BJ (cell line): ENCODE measurements at regions of chr7 and their contacts with region 1.

Region 1: DNA sequence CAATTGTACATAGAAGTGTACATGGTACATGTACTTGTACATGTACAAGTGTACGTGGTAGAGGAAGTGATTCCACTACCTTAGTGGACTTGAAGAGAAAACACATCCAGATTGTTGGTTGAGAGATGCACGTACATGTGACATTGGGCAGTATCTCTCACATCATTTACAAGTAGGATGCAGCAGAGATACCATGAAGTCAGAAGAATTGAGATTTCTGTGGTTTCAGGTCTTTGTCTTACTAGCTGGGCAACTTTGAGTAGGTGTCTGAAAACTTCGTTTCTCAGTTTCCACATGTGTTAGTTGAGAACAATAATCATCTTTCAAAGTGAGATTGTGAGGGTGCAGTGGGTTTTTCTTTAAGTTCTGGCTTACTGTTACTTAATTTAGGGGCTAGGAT is 21.5 kb downstream of the CLDN12 start:
- DNase-seq: no peak
- H3K4me3 ChIP-seq: no peak overlapping the region
- H3K27me3 ChIP-seq: no peaks in the 10 kb centered on the region
- CTCF ChIP-seq: no peak

Region 2: DNA sequence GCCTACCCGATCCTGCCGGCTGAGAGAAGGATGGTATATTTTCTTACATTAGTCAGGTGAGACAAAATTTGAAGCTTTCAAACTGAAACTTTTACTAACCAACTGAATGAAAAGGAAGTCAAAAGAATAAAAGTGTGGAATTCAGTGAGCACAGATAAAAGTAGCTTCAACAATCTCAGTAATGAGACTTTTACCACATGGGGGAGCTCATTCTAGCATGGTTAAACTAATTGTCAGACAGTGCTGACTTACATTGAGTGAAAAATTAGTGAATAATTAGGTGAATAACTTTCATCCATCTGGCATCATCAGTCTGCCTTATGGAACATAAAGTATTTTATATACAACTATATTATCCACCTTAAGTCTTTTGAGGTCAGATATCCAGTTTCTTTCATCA is 112.0 kb before region 1 on chr7:
- CTCF ChIA-PET with region 1: interaction called, 23 read pairs
- POLR2A ChIA-PET with region 1: no interaction called
- DNase-seq: no peak
- H3K4me3 ChIP-seq: no peak overlapping the region
- H3K27me3 ChIP-seq: 0 out of 2 replicates have a peak, but pooled peaks cover 1% of the 10 kb centered on the region
- CTCF ChIP-seq: peak; percentile 26; the same call in 1 of the 2 replicates